CD14-positive monocyte (primary cell): ENCODE measurements at regions of chr2 and their contacts with region 1.

Region 1: GRCh38 chr2:88880441-88880953 is 189.0 kb downstream of the RPIA start:
- DNase-seq: peak; percentile 30 to 46 (median 40)
- H3K4me3 ChIP-seq: peak overlapping the region in 1 of 3 experiments; percentile 9
- H3K4me3 Mint-ChIP-seq: peak overlapping the region in 1 of 2 donors; percentile 59
- H3K27ac ChIP-seq: no peak overlapping the region
- H3K27ac Mint-ChIP-seq: no peak overlapping the region
- H3K4me1 ChIP-seq: peaks cover 0 to 7% of the 10 kb centered on the region in 2 donors
- H3K4me1 Mint-ChIP-seq: peaks cover 9% of the 10 kb centered on the region
- H3K27me3 ChIP-seq: no peaks in the 10 kb centered on the region
- H3K27me3 Mint-ChIP-seq: peaks cover 0 to 4% (median 1%) of the 10 kb centered on the region in 3 donors
- CTCF ChIP-seq: peak; percentile 93

Region 2: DNA sequence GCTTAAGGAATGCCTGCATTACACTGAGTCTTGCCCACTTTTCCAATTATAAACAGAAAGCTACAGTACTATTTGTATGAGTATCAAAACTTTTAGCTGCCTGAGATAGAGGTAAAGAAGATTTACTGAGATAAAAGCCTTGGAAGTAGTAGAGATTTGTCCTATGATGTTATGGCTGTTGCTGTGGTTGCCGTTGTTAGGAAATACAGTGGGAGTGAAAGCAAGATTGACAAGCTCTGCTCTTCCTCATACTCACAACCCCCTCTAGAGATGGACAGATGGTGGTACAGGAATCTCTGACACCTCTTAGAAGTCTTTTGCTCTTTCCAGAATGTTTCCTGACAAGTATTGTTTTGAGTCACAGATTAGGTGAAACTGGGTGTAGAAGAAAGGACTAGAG is 53.5 kb after region 1 on chr2:
- intact Hi-C with region 1: loop called in 1 of 2 experiments (anchors 10 kb)
- DNase-seq: peak in 2 of 3 donors; percentile 2 to 29
- H3K4me3 ChIP-seq: no peak overlapping the region
- H3K4me3 Mint-ChIP-seq: no peak overlapping the region
- H3K27ac ChIP-seq: no peak overlapping the region
- H3K27ac Mint-ChIP-seq: peak overlapping the region in 2 of 7 donors; percentile 14 to 73
- H3K4me1 ChIP-seq: no peaks in the 10 kb centered on the region
- H3K4me1 Mint-ChIP-seq: peaks cover 2% of the 10 kb centered on the region
- H3K27me3 ChIP-seq: no peaks in the 10 kb centered on the region
- H3K27me3 Mint-ChIP-seq: no peaks in the 10 kb centered on the region
- CTCF ChIP-seq: peak; percentile 36